Activated CD4-positive, alpha-beta T cell treated with anti-CD3 and anti-CD28 coated beads, Interleukin-2, amount 10 ng/mL, durations not matched to agents 24 days and 14 days (primary cell): ENCODE measurements at regions of chr14 and their contacts with region 1.

Region 1: DNA sequence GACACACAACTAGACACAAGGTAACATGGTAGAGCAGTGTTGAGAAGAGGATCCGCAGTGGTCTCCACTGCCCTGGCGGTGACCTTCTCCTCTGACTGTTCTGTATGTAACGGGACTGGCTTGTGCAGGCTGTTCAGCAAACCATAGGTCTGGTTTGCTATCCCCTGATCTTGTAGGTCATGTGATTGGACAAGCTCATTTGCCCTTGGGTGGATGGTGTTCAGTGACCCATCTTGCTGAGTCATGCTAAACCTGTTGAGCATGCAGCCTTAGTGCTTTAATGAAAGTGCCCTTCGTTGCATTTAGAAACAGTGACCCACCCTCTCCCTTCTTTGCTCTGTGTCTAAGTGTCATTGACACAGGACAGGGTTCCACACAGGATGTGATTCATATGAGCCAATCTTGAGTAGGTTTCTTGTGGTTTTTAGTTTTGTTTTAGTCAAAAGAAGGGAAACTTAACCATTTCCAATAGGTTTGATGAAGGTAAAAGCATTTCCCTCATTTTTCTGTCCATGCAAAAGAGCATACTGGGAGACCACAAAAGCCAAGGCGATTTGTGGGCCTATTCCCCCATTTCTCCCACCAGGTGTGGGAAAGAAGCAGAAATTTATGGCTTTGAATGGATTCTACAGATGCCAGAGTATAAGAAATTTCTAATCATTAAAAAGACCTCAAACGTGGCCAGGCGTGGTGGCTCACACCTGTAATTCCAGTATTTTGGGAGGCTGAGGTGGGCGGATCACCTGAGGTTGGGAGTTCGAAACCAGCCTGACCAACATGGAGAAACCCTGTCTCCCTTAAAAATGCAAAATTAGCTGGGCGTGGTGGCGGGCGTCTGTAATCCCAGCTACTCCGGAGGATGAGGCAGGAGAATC is 32.6 kb upstream of the HIF1A start:
- DNase-seq: peak; percentile 90
- H3K4me3 Mint-ChIP-seq: peak overlapping the region; percentile 70
- H3K27ac Mint-ChIP-seq: peak overlapping the region; percentile 95
- H3K4me1 Mint-ChIP-seq: peaks cover 66% of the 10 kb centered on the region
- H3K27me3 Mint-ChIP-seq: no peaks in the 10 kb centered on the region

Region 2: GRCh38 chr14:61475316-61475715 is 187.4 kb before region 1 on chr14:
- intact Hi-C with region 1: loop called (anchors 1 kb)
- DNase-seq: peak; percentile 79
- H3K4me3 Mint-ChIP-seq: peak overlapping the region; percentile 39
- H3K27ac Mint-ChIP-seq: peak overlapping the region; percentile 87
- H3K4me1 Mint-ChIP-seq: peaks cover 85% of the 10 kb centered on the region
- H3K27me3 Mint-ChIP-seq: no peaks in the 10 kb centered on the region

Region 3: GRCh38 chr14:61511558-61511924 is 151.1 kb before region 1 on chr14:
- intact Hi-C with region 1: loop called (anchors 2 kb)
- DNase-seq: peak; percentile 75
- H3K4me3 Mint-ChIP-seq: peak overlapping the region; percentile 65
- H3K27ac Mint-ChIP-seq: peak overlapping the region; percentile 83
- H3K4me1 Mint-ChIP-seq: peaks cover 73% of the 10 kb centered on the region
- H3K27me3 Mint-ChIP-seq: no peaks in the 10 kb centered on the region

Region 4: GRCh38 chr14:61537563-61538463 is 124.9 kb before region 1 on chr14:
- intact Hi-C with region 1: no loop called
- DNase-seq: peak; percentile 67
- H3K4me3 Mint-ChIP-seq: no peak overlapping the region
- H3K27ac Mint-ChIP-seq: peak overlapping the region; percentile 73
- H3K4me1 Mint-ChIP-seq: peaks cover 62% of the 10 kb centered on the region
- H3K27me3 Mint-ChIP-seq: no peaks in the 10 kb centered on the region

Region 5: GRCh38 chr14:61561657-61562276 is 100.9 kb before region 1 on chr14:
- intact Hi-C with region 1: loop called (anchors 2 kb)
- DNase-seq: no peak
- H3K4me3 Mint-ChIP-seq: peak overlapping the region; percentile 5
- H3K27ac Mint-ChIP-seq: peak overlapping the region; percentile 70
- H3K4me1 Mint-ChIP-seq: peaks cover 60% of the 10 kb centered on the region
- H3K27me3 Mint-ChIP-seq: no peaks in the 10 kb centered on the region

Region 6: GRCh38 chr14:61598980-61599379 is 63.7 kb before region 1 on chr14:
- intact Hi-C with region 1: loop called (anchors 1 kb)
- DNase-seq: peak; percentile 81
- H3K4me3 Mint-ChIP-seq: peak overlapping the region; percentile 31
- H3K27ac Mint-ChIP-seq: peak overlapping the region; percentile 79
- H3K4me1 Mint-ChIP-seq: peaks cover 40% of the 10 kb centered on the region
- H3K27me3 Mint-ChIP-seq: no peaks in the 10 kb centered on the region